AG04449 (cell line): ENCODE measurements at regions of chr3 and their contacts with region 1.

Region 1: DNA sequence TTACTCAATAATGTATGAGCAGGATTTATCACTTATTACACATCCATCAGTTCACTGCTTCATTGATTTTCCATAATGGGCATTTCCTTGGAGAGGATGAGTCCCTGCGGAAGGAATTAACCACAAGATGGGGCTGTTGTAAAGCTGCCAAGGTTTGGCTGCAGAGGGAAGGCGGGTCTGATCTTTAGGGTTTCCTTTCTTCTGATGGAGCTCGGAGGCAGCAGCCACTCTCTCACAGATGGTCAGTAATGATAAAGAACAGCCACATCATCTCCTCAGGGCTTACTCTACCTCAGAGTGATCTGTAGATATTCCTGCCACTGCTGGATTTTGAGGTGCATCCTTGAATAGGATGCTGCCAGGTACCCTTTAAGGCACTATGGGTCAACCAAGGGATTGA is 115.2 kb downstream of the USP13 start:
- DNase-seq: no peak
- H3K4me3 ChIP-seq: no peak overlapping the region
- CTCF ChIP-seq: peak; percentile 68

Region 2: GRCh38 chr3:179738998-179739397 is 29.1 kb before region 1 on chr3:
- CTCF ChIA-PET with region 1: interaction called, 10 read pairs
- POLR2A ChIA-PET with region 1: no interaction called
- DNase-seq: no peak
- H3K4me3 ChIP-seq: no peak overlapping the region
- CTCF ChIP-seq: no peak

Region 3: GRCh38 chr3:179750720-179751328 is 17.3 kb before region 1 on chr3:
- CTCF ChIA-PET with region 1: interaction called, 10 read pairs
- POLR2A ChIA-PET with region 1: no interaction called
- DNase-seq: no peak
- H3K4me3 ChIP-seq: no peak overlapping the region
- CTCF ChIP-seq: peak; percentile 64

Region 4: DNA sequence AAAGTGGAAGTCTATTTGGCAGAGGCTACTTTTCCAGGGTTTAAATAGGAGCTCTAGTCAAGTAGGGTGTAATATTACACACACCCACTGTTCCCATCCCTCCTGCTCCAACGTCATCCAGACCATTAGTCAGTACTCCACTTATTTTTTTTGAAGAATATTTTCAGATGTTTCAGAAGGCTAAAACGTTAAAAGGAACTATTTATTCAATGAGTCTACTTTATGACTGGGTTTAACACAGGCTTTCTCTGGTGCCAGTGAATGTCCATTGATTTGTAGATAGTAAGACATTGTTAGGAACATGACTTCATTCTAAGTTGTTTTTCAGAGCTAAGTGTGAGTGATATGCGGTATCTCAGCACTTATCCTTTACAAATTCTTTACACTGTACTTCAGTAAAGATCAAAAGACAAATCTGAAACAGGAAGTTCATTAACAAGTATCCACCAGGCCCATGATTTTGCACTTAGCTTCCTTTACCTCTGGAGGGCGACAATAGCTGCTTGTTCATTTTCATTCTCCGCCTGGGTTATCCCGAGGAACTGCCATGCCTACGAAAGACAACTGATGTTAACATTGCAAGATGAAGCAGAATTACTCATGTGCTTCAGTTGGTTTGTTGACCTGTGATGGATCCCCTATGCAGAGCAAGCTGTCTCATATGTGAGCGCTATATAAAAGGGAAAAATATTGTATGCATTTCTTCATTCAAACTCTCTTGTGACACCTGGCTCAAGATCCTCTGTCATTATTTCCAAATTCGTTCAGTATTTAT is 43.4 kb after region 1 on chr3:
- CTCF ChIA-PET with region 1: interaction called, 20 read pairs
- POLR2A ChIA-PET with region 1: no interaction called
- DNase-seq: peak; percentile 71
- H3K4me3 ChIP-seq: no peak overlapping the region
- CTCF ChIP-seq: peak; percentile 72

Region 5: DNA sequence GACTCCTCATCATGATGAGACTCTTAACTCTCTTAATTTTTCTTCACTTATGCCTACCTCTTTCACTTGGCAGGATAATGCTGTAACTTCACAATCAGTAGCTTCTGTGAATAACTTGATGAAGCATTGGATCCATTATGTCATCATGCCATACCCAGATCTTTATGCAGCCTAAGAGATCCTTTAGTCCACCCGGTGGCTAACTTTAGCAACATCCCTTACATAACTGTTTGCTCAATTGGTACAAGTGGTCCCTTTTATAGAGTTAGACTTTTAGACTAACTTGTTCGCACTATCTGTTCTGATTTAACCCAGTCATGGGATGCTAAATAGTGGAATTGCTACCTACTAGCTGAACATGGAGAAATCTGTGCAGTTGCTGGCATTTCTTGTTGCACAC is 69.3 kb after region 1 on chr3:
- CTCF ChIA-PET with region 1: interaction called, 16 read pairs
- POLR2A ChIA-PET with region 1: no interaction called
- DNase-seq: no peak
- H3K4me3 ChIP-seq: no peak overlapping the region
- CTCF ChIP-seq: peak; percentile 5

Region 6: GRCh38 chr3:179929091-179929529 is 161.0 kb after region 1 on chr3:
- CTCF ChIA-PET with region 1: interaction called, 12 read pairs
- POLR2A ChIA-PET with region 1: no interaction called
- DNase-seq: peak; percentile 31
- H3K4me3 ChIP-seq: no peak overlapping the region
- CTCF ChIP-seq: peak; percentile 69

Region 7: DNA sequence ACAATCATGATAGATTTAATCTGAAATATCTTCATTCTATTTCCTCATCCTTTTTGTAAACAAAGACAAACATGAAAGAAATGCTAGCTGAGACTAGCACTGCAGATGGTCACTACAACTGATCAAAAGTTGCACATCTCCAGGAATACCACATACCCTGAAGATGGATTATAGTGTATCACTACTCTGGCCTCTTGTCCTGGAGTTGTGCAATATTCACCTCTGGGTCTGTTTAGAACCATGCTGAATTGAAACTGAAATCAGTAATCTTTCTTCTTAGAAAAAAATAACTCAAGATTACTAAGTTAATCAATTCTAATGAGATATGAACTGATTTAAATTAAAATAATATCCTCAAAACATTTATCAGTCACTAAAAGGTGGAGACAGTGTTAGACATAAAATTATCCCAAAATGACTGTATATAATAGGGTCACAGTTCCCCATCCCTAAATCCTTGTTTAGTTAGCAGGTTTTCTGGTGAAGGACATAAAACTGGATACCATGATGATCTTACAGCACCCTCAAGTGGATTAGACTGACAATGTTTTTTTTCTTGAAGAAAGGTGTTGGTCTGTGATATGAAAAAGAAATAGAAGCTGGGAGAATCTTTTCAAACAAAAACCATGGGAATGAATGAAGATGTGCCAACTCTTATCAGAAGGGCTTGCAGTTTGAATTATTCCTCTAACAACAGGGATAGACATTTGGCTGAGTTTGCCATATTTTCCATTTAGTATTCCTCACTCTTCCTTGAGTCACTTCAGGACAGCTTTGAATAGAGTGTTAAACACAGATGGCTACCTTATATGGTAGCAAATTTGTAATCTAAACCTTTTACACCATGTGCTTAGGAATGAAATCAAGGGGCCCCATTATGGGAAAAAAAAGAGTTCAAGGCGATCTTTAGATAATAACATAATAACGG is 826.8 kb after region 1 on chr3:
- CTCF ChIA-PET with region 1: interaction called, 24 read pairs
- POLR2A ChIA-PET with region 1: no interaction called
- DNase-seq: peak; percentile 26
- H3K4me3 ChIP-seq: no peak overlapping the region
- CTCF ChIP-seq: peak; percentile 47